ENCODE measurements at regions of chr11 and their contacts with region 1.

Region 1: GRCh38 chr11:78564490-78565467 is 9.9 kb downstream of the NARS2 start:
- DNase-seq: peak in 1 of 5 donors; percentile 53
- H3K4me3 ChIP-seq: no peak overlapping the region
- H3K27ac ChIP-seq: no peak overlapping the region
- H3K4me1 ChIP-seq: peaks cover 13% of the 10 kb centered on the region
- H3K27me3 ChIP-seq: no peaks in the 10 kb centered on the region
- CTCF ChIP-seq: peak; percentile 74 to 83 (median 80)
- EP300 ChIP-seq: no peak
- POLR2A ChIP-seq: no peak

Region 2: GRCh38 chr11:78149646-78150045 is 415.1 kb before region 1 on chr11:
- intact Hi-C with region 1: loop called in 1 of 4 experiments (anchors 5 kb)
- DNase-seq: peak in 1 of 5 donors; percentile 56
- H3K4me3 ChIP-seq: no peak overlapping the region
- H3K27ac ChIP-seq: no peak overlapping the region
- H3K4me1 ChIP-seq: peaks cover 1% of the 10 kb centered on the region
- H3K27me3 ChIP-seq: no peaks in the 10 kb centered on the region
- CTCF ChIP-seq: peak in 1 of 3 donors; percentile 46
- EP300 ChIP-seq: no peak
- POLR2A ChIP-seq: no peak

Region 3: GRCh38 chr11:78228467-78228866 is 336.3 kb before region 1 on chr11:
- intact Hi-C with region 1: loop called in 2 of 4 experiments (anchors 2 to 10 kb)
- DNase-seq: peak in 1 of 5 donors; percentile 41
- H3K4me3 ChIP-seq: no peak overlapping the region
- H3K27ac ChIP-seq: no peak overlapping the region
- H3K4me1 ChIP-seq: peaks cover 2% of the 10 kb centered on the region
- H3K27me3 ChIP-seq: no peaks in the 10 kb centered on the region
- CTCF ChIP-seq: peak in 2 of 3 donors; percentile 59 to 63
- EP300 ChIP-seq: no peak
- POLR2A ChIP-seq: no peak

Measured in ovary (tissue), 10 donors.